ENCODE measurements at regions of chr9 and their contacts with region 1.

Region 1: GRCh38 chr9:21570643-21571275 is 88.6 kb upstream of the IFNE start:
- DNase-seq: no peak
- ATAC-seq: no peak
- H3K4me3 ChIP-seq: no peak overlapping the region
- H3K4me3 Mint-ChIP-seq: no peak overlapping the region
- H3K27ac ChIP-seq: no peak overlapping the region
- H3K27ac Mint-ChIP-seq: no peak overlapping the region
- H3K4me1 ChIP-seq: no peaks in the 10 kb centered on the region
- H3K4me1 Mint-ChIP-seq: peaks cover 4% of the 10 kb centered on the region
- H3K27me3 ChIP-seq: peaks cover 0 to 2% of the 10 kb centered on the region in 2 experiments
- H3K27me3 Mint-ChIP-seq: no peaks in the 10 kb centered on the region
- CTCF ChIP-seq: no peak

Region 2: DNA sequence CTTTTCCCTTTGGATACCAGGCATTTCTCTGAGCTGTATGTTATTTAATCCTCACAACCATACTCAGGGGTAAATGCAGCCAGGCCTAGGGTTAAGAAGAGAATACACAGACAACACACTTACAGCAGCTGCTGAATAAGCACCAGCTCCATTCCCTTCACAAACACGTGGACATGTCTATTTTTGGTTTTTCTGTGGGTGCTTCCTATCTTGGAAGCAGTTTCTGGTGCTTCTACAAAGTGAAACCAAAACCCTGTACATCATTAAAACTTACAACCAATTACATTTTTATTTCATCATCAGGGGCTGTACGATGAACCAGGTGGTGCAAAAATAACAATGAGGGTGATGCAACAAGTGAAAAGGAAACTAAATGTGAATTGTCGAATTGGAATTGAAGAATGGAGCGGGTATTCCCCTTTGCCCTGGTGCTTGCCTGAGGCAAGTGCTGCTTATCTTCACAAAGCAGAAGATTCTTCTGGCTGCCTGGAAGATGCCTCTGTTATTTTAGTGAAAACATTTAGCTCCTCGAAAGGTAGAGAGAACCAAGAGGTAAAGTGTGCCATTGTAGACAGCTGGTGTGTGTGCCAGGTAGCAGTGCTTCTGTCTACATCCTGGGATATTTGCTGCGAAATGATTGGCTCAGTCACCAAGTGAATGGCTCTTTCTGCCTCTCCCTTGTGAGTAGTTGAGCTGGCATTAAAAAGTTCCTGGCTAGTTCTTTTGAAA is 474.4 kb before region 1 on chr9:
- CTCF ChIA-PET with region 1: no interaction called
- POLR2A ChIA-PET with region 1: no interaction called
- intact Hi-C with region 1: loop called in 1 of 2 experiments (anchors 5 kb)
- DNase-seq: peak in 5 of 9 experiments; percentile 13 to 90 (median 48)
- ATAC-seq: peak; percentile 97
- H3K4me3 ChIP-seq: peak overlapping the region; percentile 16 to 36
- H3K4me3 Mint-ChIP-seq: peak overlapping the region; percentile 74
- H3K27ac ChIP-seq: peak overlapping the region in 1 of 2 experiments; percentile 84
- H3K27ac Mint-ChIP-seq: peak overlapping the region; percentile 83
- H3K4me1 ChIP-seq: peaks cover 15% of the 10 kb centered on the region
- H3K4me1 Mint-ChIP-seq: peaks cover 36% of the 10 kb centered on the region
- H3K27me3 ChIP-seq: no peaks in the 10 kb centered on the region
- H3K27me3 Mint-ChIP-seq: no peaks in the 10 kb centered on the region
- CTCF ChIP-seq: no peak

Region 3: GRCh38 chr9:21591221-21592062 is 20.7 kb after region 1 on chr9:
- CTCF ChIA-PET with region 1: no interaction called
- POLR2A ChIA-PET with region 1: no interaction called
- intact Hi-C with region 1: no loop called
- DNase-seq: peak in 4 of 9 experiments; percentile 13 to 29 (median 24)
- ATAC-seq: no peak
- H3K4me3 ChIP-seq: no peak overlapping the region
- H3K4me3 Mint-ChIP-seq: no peak overlapping the region
- H3K27ac ChIP-seq: no peak overlapping the region
- H3K27ac Mint-ChIP-seq: no peak overlapping the region
- H3K4me1 ChIP-seq: peaks cover 5% of the 10 kb centered on the region
- H3K4me1 Mint-ChIP-seq: peaks cover 10% of the 10 kb centered on the region
- H3K27me3 ChIP-seq: no peaks in the 10 kb centered on the region
- H3K27me3 Mint-ChIP-seq: no peaks in the 10 kb centered on the region
- CTCF ChIP-seq: no peak

Region 4: GRCh38 chr9:21812946-21813568 is 242.3 kb after region 1 on chr9:
- CTCF ChIA-PET with region 1: no interaction called
- POLR2A ChIA-PET with region 1: no interaction called
- intact Hi-C with region 1: no loop called
- DNase-seq: peak; percentile 21 to 80 (median 66)
- ATAC-seq: peak; percentile 85
- H3K4me3 ChIP-seq: no peak overlapping the region
- H3K4me3 Mint-ChIP-seq: no peak overlapping the region
- H3K27ac ChIP-seq: no peak overlapping the region
- H3K27ac Mint-ChIP-seq: peak overlapping the region; percentile 22
- H3K4me1 ChIP-seq: peaks cover 10% of the 10 kb centered on the region
- H3K4me1 Mint-ChIP-seq: peaks cover 22% of the 10 kb centered on the region
- H3K27me3 ChIP-seq: no peaks in the 10 kb centered on the region
- H3K27me3 Mint-ChIP-seq: no peaks in the 10 kb centered on the region
- CTCF ChIP-seq: peak; percentile 66

Region 5: DNA sequence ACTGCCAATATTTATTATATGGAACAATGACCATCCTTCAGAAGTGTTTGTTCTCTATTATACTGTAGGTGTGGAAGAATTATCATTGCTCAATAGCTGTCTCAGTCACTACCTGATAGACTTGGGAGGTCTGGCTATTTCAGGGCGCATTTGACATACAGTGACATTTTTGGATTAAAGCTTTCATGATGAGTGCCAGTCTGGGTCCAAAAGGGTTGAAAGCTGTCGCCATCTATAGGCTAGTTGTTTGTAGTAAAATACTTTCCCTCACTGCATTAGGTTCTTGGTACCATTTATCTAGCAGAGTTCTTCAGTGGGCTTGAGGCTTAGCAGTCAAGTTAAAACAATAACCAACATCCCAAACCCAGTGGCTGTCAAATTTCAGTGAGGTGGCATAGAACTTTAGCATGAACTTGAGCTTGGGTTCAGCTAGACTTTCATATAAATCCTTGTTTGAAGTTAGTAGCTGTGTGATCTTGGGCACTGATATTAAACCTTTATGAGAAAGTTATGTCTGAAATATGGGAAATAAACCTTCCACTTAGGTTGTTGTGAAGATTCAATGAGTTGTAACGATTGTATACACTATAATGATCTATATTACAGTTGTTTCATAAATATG is 548.9 kb after region 1 on chr9:
- CTCF ChIA-PET with region 1: no interaction called
- POLR2A ChIA-PET with region 1: no interaction called
- intact Hi-C with region 1: no loop called
- DNase-seq: peak in 2 of 9 experiments; percentile 35 to 45
- ATAC-seq: no peak
- H3K4me3 ChIP-seq: no peak overlapping the region
- H3K4me3 Mint-ChIP-seq: no peak overlapping the region
- H3K27ac ChIP-seq: no peak overlapping the region
- H3K27ac Mint-ChIP-seq: no peak overlapping the region
- H3K4me1 ChIP-seq: no peaks in the 10 kb centered on the region
- H3K4me1 Mint-ChIP-seq: no peaks in the 10 kb centered on the region
- H3K27me3 ChIP-seq: no peaks in the 10 kb centered on the region
- H3K27me3 Mint-ChIP-seq: peaks cover 8% of the 10 kb centered on the region
- CTCF ChIP-seq: peak; percentile 24

Measured in CD8-positive, alpha-beta T cell (primary cell).